ENCODE measurements at regions of chr7 and their contacts with region 1.

Region 1: GRCh38 chr7:17640730-17641377 is 299.4 kb downstream of the SNX13 start:
- DNase-seq: no peak
- H3K4me3 Mint-ChIP-seq: no peak overlapping the region
- H3K27ac Mint-ChIP-seq: no peak overlapping the region
- H3K4me1 Mint-ChIP-seq: no peaks in the 10 kb centered on the region
- H3K27me3 Mint-ChIP-seq: peaks cover 9% of the 10 kb centered on the region

Region 2: DNA sequence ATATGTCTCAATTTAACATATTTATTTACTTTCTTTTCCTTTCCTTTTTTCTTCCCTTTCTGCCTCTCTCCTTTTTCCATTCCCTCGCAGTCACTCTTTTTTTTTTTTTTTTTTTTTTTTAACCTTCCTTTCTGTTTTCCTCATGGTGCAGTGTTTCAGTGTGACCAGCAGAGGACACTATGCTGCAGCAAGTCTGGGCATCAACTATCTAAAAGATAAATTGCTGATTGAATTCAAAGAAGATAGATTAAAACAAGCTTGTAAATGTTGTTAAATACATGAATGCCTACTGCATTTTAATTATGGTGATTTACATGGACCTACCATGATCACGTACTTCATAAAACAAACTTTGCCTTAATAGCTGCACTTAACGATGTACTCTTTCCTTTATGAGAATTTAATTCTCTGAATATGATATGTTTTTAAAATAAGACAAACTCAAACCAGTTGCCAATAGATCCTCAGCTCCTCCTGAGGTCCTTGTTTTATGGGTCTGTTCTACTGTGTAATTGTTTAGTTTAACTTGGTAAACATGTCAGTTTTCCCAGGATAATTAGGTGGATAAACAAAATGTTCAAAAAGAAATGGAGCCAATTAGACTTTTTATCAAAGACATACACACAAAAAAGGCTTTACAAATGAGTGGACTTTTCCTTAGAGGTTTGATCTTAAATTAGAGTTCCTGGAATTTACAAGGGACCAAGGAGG is 658.1 kb before region 1 on chr7:
- CTCF ChIA-PET with region 1: interaction called, 5 read pairs
- POLR2A ChIA-PET with region 1: no interaction called
- intact Hi-C with region 1: loop called (anchors 5 kb)
- DNase-seq: peak; percentile 34
- H3K4me3 Mint-ChIP-seq: no peak overlapping the region
- H3K27ac Mint-ChIP-seq: no peak overlapping the region
- H3K4me1 Mint-ChIP-seq: peaks cover 2% of the 10 kb centered on the region
- H3K27me3 Mint-ChIP-seq: peaks cover 4% of the 10 kb centered on the region

Region 3: GRCh38 chr7:17523813-17524741 is 116.8 kb before region 1 on chr7:
- CTCF ChIA-PET with region 1: no interaction called
- POLR2A ChIA-PET with region 1: no interaction called
- intact Hi-C with region 1: no loop called
- DNase-seq: no peak
- H3K4me3 Mint-ChIP-seq: no peak overlapping the region
- H3K27ac Mint-ChIP-seq: no peak overlapping the region
- H3K4me1 Mint-ChIP-seq: peaks cover 8% of the 10 kb centered on the region
- H3K27me3 Mint-ChIP-seq: peaks cover 3% of the 10 kb centered on the region

Region 4: GRCh38 chr7:17651926-17652385 is 11.1 kb after region 1 on chr7:
- CTCF ChIA-PET with region 1: interaction called, 17 read pairs
- POLR2A ChIA-PET with region 1: no interaction called
- intact Hi-C with region 1: no loop called
- DNase-seq: no peak
- H3K4me3 Mint-ChIP-seq: no peak overlapping the region
- H3K27ac Mint-ChIP-seq: no peak overlapping the region
- H3K4me1 Mint-ChIP-seq: no peaks in the 10 kb centered on the region
- H3K27me3 Mint-ChIP-seq: peaks cover 12% of the 10 kb centered on the region